Activated T-helper 1 cell treated with anti-CD3 and anti-CD28 coated beads, Interleukin-12 subunit alpha, Interleukin-12 subunit beta, Interleukin-2, Interleukin-4 antibody, amounts not matched to agents 30 ng/mL and 10 ng/mL and 1 ng/mL, durations not matched to agents 14 hours and 24 hours and 36 hours (primary cell): ENCODE measurements at regions of chr12 and their contacts with region 1.

Region 1: GRCh38 chr12:25386831-25387731 is 136.4 kb upstream of the KRAS start:
- DNase-seq: peak; percentile 73
- H3K4me3 Mint-ChIP-seq: peak overlapping the region; percentile 89
- H3K27ac Mint-ChIP-seq: peak overlapping the region; percentile 98
- H3K4me1 Mint-ChIP-seq: peaks cover 64% of the 10 kb centered on the region
- H3K27me3 Mint-ChIP-seq: peaks cover 2% of the 10 kb centered on the region

Region 2: GRCh38 chr12:25101092-25101445 is 286.0 kb before region 1 on chr12:
- intact Hi-C with region 1: no loop called
- DNase-seq: no peak
- H3K4me3 Mint-ChIP-seq: no peak overlapping the region
- H3K27ac Mint-ChIP-seq: no peak overlapping the region
- H3K4me1 Mint-ChIP-seq: no peaks in the 10 kb centered on the region
- H3K27me3 Mint-ChIP-seq: no peaks in the 10 kb centered on the region

Region 3: DNA sequence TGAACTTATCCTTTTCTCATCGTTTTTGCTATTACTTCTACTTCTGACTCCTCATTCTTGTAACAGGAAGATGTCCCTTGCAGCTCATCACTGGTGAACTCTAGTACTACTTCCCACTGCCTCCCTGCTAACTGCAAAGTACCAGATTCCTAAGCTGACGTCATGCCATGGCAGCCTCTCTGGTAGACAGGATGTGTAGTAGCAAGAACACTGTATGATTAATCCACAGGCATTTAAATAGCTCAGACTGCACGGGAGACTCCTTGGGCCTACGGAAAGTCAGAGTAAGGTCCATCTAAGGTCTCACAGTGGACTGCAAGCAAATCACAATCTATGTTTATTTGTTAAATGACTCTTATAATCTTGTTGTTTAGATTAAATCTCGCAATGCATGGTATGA is 235.6 kb before region 1 on chr12:
- intact Hi-C with region 1: loop called (anchors 1 kb)
- DNase-seq: no peak
- H3K4me3 Mint-ChIP-seq: no peak overlapping the region
- H3K27ac Mint-ChIP-seq: no peak overlapping the region
- H3K4me1 Mint-ChIP-seq: peaks cover 7% of the 10 kb centered on the region
- H3K27me3 Mint-ChIP-seq: no peaks in the 10 kb centered on the region

Region 4: GRCh38 chr12:25208554-25208953 is 178.5 kb before region 1 on chr12:
- intact Hi-C with region 1: loop called (anchors 1 kb)
- DNase-seq: no peak
- H3K4me3 Mint-ChIP-seq: no peak overlapping the region
- H3K27ac Mint-ChIP-seq: peak overlapping the region; percentile 29
- H3K4me1 Mint-ChIP-seq: no peaks in the 10 kb centered on the region
- H3K27me3 Mint-ChIP-seq: no peaks in the 10 kb centered on the region

Region 5: DNA sequence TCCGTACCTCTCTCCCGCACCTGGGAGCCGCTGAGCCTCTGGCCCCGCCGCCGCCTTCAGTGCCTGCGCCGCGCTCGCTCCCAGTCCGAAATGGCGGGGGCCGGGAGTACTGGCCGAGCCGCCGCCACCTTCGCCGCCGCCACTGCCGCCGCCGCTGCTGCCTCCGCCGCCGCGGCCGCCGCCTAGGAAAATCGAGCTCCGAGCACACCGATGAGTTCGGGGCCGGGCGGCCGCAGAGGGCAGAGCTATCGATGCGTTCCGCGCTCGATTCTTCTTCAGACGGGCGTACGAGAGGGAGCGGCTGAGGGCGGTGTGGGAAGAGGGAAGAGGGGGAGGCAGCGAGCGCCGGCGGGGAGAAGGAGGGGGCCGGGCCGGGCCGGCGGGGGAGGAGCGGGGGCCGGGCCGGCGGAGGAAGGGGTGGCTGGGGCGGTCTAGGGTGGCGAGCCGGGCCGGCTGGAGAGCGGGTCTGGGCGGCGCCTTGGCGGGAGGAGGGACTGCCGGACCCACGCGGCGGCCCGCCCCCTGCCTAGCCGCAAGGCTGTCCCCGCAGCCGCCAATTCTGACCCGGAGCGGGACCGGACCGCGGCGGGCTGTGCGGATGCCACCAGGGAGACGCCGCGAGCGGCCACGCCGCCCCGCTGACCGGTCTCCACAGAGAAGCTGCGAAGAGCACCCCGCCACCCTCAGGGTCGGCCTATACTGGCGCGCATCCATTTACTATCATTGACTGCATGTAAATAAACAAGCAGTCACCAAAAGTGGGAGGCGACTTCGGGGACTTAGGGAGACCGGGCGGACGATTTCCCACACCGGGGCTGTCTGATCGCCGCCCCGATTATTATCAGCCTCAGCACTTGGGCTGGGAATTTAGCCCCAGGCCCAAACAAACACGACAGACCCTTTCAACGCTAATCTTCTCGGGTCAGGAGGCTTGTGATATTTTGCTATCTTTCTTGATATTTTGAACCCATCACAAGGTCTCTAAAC is 136.0 kb before region 1 on chr12 and contains the start of gene KRAS:
- intact Hi-C with region 1: loop called (anchors 1 kb)
- DNase-seq: peak; percentile 89
- H3K4me3 Mint-ChIP-seq: peak within 1 kb of the TSS; percentile 90
- H3K27ac Mint-ChIP-seq: peak within 1 kb of the TSS; percentile 96
- H3K4me1 Mint-ChIP-seq: peaks cover 45% of the 10 kb centered on the region
- H3K27me3 Mint-ChIP-seq: peaks cover 10% of the 10 kb centered on the region
- total RNA-seq, gene KRAS: 43.1 and 43.3 TPM in 2 replicates

Region 6: GRCh38 chr12:25276199-25276937 is 110.7 kb before region 1 on chr12:
- intact Hi-C with region 1: no loop called
- DNase-seq: no peak
- H3K4me3 Mint-ChIP-seq: no peak overlapping the region
- H3K27ac Mint-ChIP-seq: peak overlapping the region; percentile 2
- H3K4me1 Mint-ChIP-seq: peaks cover 24% of the 10 kb centered on the region
- H3K27me3 Mint-ChIP-seq: peaks cover 2% of the 10 kb centered on the region

Region 7: GRCh38 chr12:26028953-26029735 is 642.1 kb after region 1 on chr12:
- intact Hi-C with region 1: loop called (anchors 1 kb)
- DNase-seq: no peak
- H3K4me3 Mint-ChIP-seq: no peak overlapping the region
- H3K27ac Mint-ChIP-seq: no peak overlapping the region
- H3K4me1 Mint-ChIP-seq: no peaks in the 10 kb centered on the region
- H3K27me3 Mint-ChIP-seq: peaks cover 11% of the 10 kb centered on the region